ENCODE measurements at regions of chr3 and their contacts with region 1.

Region 1: DNA sequence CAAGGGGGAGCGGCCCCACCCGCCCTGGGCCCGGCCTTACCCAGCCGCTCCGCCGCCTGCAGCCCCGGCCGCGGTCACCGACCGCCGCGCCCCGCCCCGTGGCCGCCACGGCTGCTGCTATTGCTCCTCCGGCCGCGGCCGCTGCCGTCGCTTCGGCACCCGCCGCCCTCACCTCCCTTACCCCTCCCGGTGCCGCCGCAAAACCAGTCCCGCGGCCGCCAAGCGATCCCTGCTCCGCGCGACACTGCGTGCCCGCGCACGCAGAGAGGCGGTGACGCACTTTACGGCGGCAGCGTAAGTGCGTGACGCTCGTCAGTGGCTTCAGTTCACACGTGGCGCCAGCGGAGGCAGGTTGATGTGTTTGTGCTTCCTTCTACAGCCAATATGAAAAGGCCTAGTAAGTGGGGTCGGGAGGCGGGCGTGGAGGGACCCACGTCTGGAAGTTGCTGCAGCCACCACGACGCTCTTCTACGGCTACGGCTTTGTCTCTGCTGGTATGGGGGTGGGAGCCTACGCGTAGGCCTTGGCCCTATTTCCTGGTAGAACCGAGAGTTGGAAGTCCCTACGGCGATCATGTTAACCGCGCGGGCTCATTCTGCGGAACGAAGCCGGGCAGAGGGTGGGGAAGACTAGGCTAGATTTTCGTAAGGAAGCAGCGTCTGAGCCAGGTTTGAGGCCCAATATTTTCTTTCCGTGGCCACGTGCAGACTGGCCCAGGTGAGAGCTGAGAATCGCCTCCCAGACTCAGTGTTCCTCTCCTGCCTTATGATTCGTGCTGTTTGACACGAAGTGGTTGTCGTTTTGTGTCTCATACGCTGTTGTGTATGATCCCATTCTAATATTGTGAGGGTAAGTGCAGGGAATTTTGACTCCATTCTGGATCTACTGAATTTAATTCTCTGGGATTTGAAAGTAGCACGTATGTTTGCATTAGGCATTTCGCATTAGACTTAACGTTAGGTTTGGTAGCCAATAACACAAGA is at the starts of genes GNL3 and PBRM1:
- DNase-seq: peak; percentile 91
- H3K4me3 Mint-ChIP-seq: peak within 1 kb of the TSS; percentile 92
- H3K27ac Mint-ChIP-seq: peak within 1 kb of the TSS; percentile 97
- H3K4me1 Mint-ChIP-seq: peaks cover 22% of the 10 kb centered on the region
- H3K27me3 Mint-ChIP-seq: no peaks in the 10 kb centered on the region
- CTCF ChIP-seq: no peak
- total RNA-seq, gene GNL3: 113 and 118 TPM in 2 replicates
- total RNA-seq, gene PBRM1: 48.5 and 54.9 TPM in 2 replicates

Region 2: GRCh38 chr3:52428151-52429005 is 257.6 kb before region 1 on chr3:
- CTCF ChIA-PET with region 1: no interaction called
- intact Hi-C with region 1: loop called (anchors 5 kb)
- DNase-seq: peak; percentile 63
- H3K4me3 Mint-ChIP-seq: no peak overlapping the region
- H3K27ac Mint-ChIP-seq: no peak overlapping the region
- H3K4me1 Mint-ChIP-seq: no peaks in the 10 kb centered on the region
- H3K27me3 Mint-ChIP-seq: peaks cover 37% of the 10 kb centered on the region
- CTCF ChIP-seq: peak; percentile 35

Region 3: DNA sequence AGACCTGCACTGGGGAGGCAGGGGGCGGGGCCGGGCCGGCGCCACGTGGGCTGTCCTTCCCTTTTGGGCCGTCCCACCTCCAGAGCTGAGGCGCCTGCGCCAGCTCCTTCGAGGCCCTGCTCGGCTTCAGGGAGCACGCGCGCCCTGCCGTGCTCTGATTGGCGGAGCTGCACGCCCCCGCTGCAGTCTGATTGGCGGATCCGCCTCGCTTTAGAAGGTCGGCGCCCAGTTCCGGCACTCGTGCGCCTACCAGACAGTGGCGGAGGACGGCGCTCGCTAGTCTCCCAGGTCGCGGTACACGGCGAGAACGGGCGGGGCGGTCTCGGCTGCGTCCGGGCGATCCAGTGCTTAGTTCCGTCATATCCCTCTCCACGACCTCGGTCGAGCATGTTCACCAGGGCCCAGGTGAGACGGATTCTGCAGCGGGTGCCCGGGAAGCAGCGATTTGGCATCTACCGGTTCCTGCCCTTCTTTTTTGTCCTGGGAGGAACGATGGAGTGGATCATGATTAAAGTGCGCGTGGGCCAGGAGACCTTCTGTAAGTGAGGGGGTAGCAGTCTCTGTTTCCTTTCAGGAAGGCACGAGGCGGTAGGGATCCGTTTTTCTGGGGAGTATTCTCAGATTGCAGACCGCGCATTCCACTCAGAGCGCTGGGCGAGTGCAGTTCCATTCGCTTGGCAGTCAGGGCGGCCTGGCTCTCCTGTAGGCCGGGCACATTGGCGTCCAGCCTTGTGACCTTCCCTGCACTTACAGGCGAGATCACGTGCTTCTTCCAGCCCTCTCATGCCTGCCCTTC is 149.4 kb before region 1 on chr3 and contains the start of gene UQCC5:
- CTCF ChIA-PET with region 1: no interaction called
- intact Hi-C with region 1: loop called (anchors 10 kb)
- DNase-seq: peak; percentile 97
- H3K4me3 Mint-ChIP-seq: peak within 1 kb of the TSS; percentile 82
- H3K27ac Mint-ChIP-seq: peak within 1 kb of the TSS; percentile 42
- H3K4me1 Mint-ChIP-seq: peaks cover 28% of the 10 kb centered on the region
- H3K27me3 Mint-ChIP-seq: no peaks in the 10 kb centered on the region
- CTCF ChIP-seq: no peak
- total RNA-seq, gene UQCC5: 14.0 and 15.1 TPM in 2 replicates

Region 4: DNA sequence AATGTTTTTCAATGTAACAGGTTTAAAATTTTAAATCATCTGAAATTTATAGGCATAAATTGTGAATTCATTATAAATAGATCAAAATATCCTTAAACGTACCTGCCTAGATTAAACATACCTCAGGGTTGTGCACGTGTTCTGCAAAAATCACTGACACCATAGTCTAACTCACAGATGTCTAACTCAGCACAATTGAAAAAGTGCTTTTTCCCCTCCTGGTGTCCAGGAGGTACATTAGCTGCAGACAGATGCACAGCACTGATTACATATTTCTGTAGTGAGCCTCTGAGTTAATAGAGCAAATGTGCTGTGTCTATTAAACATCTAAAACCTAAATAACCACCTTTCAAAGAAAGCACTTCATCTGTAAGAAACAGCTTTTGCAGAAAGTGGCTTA is 138.9 kb before region 1 on chr3:
- CTCF ChIA-PET with region 1: no interaction called
- intact Hi-C with region 1: no loop called
- DNase-seq: no peak
- H3K4me3 Mint-ChIP-seq: no peak overlapping the region
- H3K27ac Mint-ChIP-seq: no peak overlapping the region
- H3K4me1 Mint-ChIP-seq: no peaks in the 10 kb centered on the region
- H3K27me3 Mint-ChIP-seq: no peaks in the 10 kb centered on the region
- CTCF ChIP-seq: no peak